ENCODE measurements at regions of chr16 and their contacts with region 1.

Region 1: DNA sequence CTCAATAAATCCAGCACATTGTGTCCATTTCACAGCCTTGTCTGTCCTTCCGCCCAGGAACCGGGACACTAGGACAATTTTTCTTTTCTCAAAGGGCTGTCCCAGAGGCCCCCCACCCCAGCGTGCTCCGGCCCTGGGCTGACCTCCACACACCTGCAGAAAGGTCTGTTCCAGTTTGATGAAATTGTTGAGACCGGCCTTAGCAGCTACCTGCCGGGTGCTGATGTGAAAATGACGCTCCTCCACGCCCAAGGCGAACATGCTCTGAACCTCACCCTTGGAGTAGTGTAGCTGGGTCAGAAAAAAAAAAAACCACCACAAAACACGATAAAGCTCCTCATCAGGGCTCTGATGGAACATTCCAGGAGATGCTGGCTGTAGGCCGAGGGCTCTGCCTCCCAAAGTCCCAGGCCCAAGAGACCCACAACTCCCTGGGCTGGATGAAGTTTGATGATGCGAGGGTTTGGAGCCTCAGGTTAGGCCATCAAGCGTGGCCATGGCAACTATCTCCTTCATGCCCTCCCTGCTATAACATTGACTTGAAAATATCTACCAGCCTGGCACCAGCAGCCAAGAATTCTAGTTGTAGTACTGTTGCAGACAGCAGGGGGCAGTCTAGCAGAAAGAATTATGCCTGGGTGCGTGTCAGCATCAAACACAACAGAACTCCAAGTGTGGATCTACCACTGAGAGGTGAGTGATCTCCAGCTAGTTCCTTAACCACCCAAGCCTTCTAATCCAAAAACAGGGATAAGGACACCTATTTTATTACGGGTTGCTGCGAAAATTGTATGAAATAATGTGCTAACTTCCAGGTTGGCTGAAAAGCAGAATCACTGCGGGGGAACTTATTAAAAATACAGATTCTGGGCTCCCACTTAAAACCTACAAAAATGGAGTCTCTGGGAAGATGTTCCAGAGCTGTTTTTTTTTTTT is 62.1 kb downstream of the RMI2 start:
- DNase-seq: peak; percentile 20 to 71 (median 38)
- ATAC-seq: peak in 3 of 4 donors; percentile 49 to 78 (median 55)
- H3K4me3 ChIP-seq: no peak overlapping the region
- H3K27ac ChIP-seq: no peak overlapping the region
- H3K4me1 ChIP-seq: peaks cover 0 to 6% (median 0%) of the 10 kb centered on the region in 12 donors
- H3K27me3 ChIP-seq: no peaks in the 10 kb centered on the region
- CTCF ChIP-seq: peak; percentile 48 to 79 (median 61)
- POLR2A ChIP-seq: no peak

Region 2: GRCh38 chr16:10964039-10964890 is 443.1 kb before region 1 on chr16:
- intact Hi-C with region 1: loop called in 1 of 10 experiments (anchors 5 kb)
- DNase-seq: peak; percentile 79 to 90 (median 84)
- ATAC-seq: peak; percentile 78 to 89 (median 84)
- H3K4me3 ChIP-seq: no peak overlapping the region
- H3K27ac ChIP-seq: peak overlapping the region in 2 of 12 donors; percentile 8 to 43
- H3K4me1 ChIP-seq: peaks cover 0 to 33% (median 20%) of the 10 kb centered on the region in 12 donors
- H3K27me3 ChIP-seq: no peaks in the 10 kb centered on the region
- CTCF ChIP-seq: peak; percentile 90 to 98 (median 94)
- POLR2A ChIP-seq: no peak

Region 3: GRCh38 chr16:11497851-11498289 is 90.6 kb after region 1 on chr16:
- intact Hi-C with region 1: loop called in 1 of 10 experiments (anchors 10 kb)
- DNase-seq: no peak
- ATAC-seq: peak in 1 of 4 donors; percentile 5
- H3K4me3 ChIP-seq: no peak overlapping the region
- H3K27ac ChIP-seq: peak overlapping the region; percentile 31 to 84 (median 80)
- H3K4me1 ChIP-seq: peaks cover 0 to 39% (median 25%) of the 10 kb centered on the region in 12 donors
- H3K27me3 ChIP-seq: no peaks in the 10 kb centered on the region
- CTCF ChIP-seq: no peak
- POLR2A ChIP-seq: no peak

Region 4: DNA sequence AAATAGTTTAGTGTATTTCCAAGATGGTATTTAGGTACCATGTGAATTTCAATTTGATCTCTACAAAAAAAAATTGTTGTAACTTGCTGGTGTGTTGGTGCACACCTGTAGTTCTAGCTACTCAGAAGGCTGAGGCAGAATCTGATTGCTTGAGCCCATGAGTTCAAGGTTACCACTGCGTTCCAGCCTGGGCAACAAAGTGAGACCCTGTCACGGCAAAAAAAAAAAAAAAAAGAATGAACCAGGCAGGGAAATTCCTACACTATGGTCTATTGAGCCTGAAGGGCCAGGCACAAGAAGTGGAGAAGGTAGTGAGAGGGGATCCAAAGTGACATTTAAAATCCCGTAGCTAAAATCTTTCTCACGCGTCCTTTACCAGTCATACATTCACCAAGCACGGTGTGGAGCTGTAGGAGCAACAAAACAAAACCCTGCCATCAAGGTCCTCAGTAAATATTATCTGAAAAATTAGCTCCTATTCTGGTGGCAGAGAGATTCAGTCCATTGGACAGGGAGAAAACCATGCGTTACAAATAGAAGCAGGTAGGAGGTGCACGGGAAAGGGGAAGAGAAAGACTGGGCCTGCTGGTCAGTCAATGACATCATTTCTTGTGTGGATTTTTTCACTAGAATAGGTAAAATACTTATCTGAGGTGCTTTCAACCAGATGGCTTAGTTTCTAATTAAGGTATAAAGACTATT is 308.1 kb after region 1 on chr16:
- intact Hi-C with region 1: loop called in 4 of 10 experiments (anchors 1 to 5 kb)
- DNase-seq: no peak
- ATAC-seq: no peak
- H3K4me3 ChIP-seq: no peak overlapping the region
- H3K27ac ChIP-seq: peak overlapping the region in 1 of 12 donors; percentile 9
- H3K4me1 ChIP-seq: peaks cover 0 to 12% (median under 1%) of the 10 kb centered on the region in 12 donors
- H3K27me3 ChIP-seq: no peaks in the 10 kb centered on the region
- CTCF ChIP-seq: no peak
- POLR2A ChIP-seq: no peak

Region 5: GRCh38 chr16:11806721-11807120 is 399.4 kb after region 1 on chr16:
- intact Hi-C with region 1: loop called in 8 of 10 experiments (anchors 5 to 10 kb)
- DNase-seq: no peak
- ATAC-seq: no peak
- H3K4me3 ChIP-seq: no peak overlapping the region
- H3K27ac ChIP-seq: no peak overlapping the region
- H3K4me1 ChIP-seq: peaks cover 0 to 10% (median 0%) of the 10 kb centered on the region in 12 donors
- H3K27me3 ChIP-seq: no peaks in the 10 kb centered on the region
- CTCF ChIP-seq: no peak
- POLR2A ChIP-seq: no peak

Region 6: GRCh38 chr16:11819798-11820197 is 412.5 kb after region 1 on chr16:
- intact Hi-C with region 1: loop called in 8 of 10 experiments (anchors 5 to 10 kb)
- DNase-seq: no peak
- ATAC-seq: no peak
- H3K4me3 ChIP-seq: no peak overlapping the region
- H3K27ac ChIP-seq: no peak overlapping the region
- H3K4me1 ChIP-seq: peaks cover 0 to 19% (median 5%) of the 10 kb centered on the region in 12 donors
- H3K27me3 ChIP-seq: no peaks in the 10 kb centered on the region
- CTCF ChIP-seq: no peak
- POLR2A ChIP-seq: no peak

Region 7: DNA sequence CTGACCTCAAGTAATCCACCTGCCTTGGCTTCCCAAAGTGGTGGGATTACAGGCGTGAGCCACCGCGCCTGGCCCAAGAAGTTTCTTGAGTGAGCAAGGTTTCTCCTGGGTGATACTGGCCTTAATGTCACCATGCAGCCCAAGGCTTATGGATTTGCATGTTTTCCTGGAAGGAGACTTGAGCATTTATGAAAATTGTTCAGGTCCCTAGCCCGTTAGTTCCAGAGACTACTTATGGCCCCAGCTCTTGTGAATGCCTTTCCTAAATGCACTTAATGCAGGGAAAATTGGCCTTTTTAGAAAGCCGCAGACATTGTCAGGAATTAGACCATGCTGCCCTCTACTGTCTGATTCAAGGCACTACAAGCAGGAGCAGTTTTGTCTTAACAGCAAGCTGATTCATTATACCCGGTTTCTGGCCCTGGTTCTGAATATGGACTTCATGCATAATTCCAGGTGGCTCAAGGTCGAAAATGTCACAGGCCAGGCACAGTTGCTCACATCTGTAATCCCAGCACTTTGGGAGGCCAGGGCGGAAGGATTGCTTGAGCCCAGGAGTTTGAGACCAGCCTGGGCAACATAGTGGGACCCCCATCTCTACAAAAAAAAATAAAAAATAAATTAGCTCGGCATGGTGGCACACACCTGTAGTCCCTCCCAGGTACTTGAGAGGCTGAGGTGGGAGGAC is 660.5 kb after region 1 on chr16:
- intact Hi-C with region 1: loop called in 1 of 10 experiments (anchors 10 kb)
- DNase-seq: peak in 3 of 5 donors; percentile 41 to 46 (median 43)
- ATAC-seq: peak; percentile 57 to 79 (median 68)
- H3K4me3 ChIP-seq: no peak overlapping the region
- H3K27ac ChIP-seq: no peak overlapping the region
- H3K4me1 ChIP-seq: peaks cover 0 to 14% (median 5%) of the 10 kb centered on the region in 12 donors
- H3K27me3 ChIP-seq: no peaks in the 10 kb centered on the region
- CTCF ChIP-seq: peak; percentile 80 to 97 (median 94)
- POLR2A ChIP-seq: no peak

Measured in heart left ventricle (tissue), 16 donors.